Esophagus squamous epithelium (tissue), 5 donors: ENCODE measurements at regions of chr2 and their contacts with region 1.

Region 1: GRCh38 chr2:36459725-36460137 is 104.2 kb downstream of the CRIM1 start:
- DNase-seq: no peak
- H3K4me3 ChIP-seq: no peak overlapping the region
- H3K27ac ChIP-seq: peak overlapping the region in 3 of 4 donors; percentile 17 to 73 (median 34)
- H3K4me1 ChIP-seq: peaks cover 10 to 83% (median 41%) of the 10 kb centered on the region in 3 donors
- H3K27me3 ChIP-seq: no peaks in the 10 kb centered on the region
- CTCF ChIP-seq: peak in 3 of 6 experiments; percentile 12 to 21 (median 21)
- POLR2A ChIP-seq: no peak

Region 2: GRCh38 chr2:36123995-36124394 is 335.7 kb before region 1 on chr2:
- intact Hi-C with region 1: no loop called
- DNase-seq: no peak
- H3K4me3 ChIP-seq: no peak overlapping the region
- H3K27ac ChIP-seq: no peak overlapping the region
- H3K4me1 ChIP-seq: no peaks in the 10 kb centered on the region
- H3K27me3 ChIP-seq: no peaks in the 10 kb centered on the region
- CTCF ChIP-seq: no peak
- POLR2A ChIP-seq: no peak

Region 3: GRCh38 chr2:36367895-36368353 is 91.8 kb before region 1 on chr2:
- intact Hi-C with region 1: loop called (anchors 10 kb)
- DNase-seq: no peak
- H3K4me3 ChIP-seq: peak overlapping the region in 2 of 4 donors; percentile 10 to 21
- H3K27ac ChIP-seq: peak overlapping the region; percentile 69 to 81 (median 70)
- H3K4me1 ChIP-seq: peaks cover 34 to 98% (median 73%) of the 10 kb centered on the region in 3 donors
- H3K27me3 ChIP-seq: no peaks in the 10 kb centered on the region
- CTCF ChIP-seq: peak in 1 of 6 experiments; percentile 4
- POLR2A ChIP-seq: no peak

Region 4: GRCh38 chr2:36597532-36598377 is 138.0 kb after region 1 on chr2 and contains the start of gene FEZ2:
- intact Hi-C with region 1: no loop called
- DNase-seq: no peak
- H3K4me3 ChIP-seq: peak within 1 kb of the TSS; percentile 95 to 100 (median 99)
- H3K27ac ChIP-seq: peak within 1 kb of the TSS; percentile 94 to 98 (median 98)
- H3K4me1 ChIP-seq: peaks cover 8 to 37% (median 16%) of the 10 kb centered on the region in 3 donors
- H3K27me3 ChIP-seq: no peaks in the 10 kb centered on the region
- CTCF ChIP-seq: no peak
- POLR2A ChIP-seq: peak in 2 of 4 donors; percentile 19 to 35
- total RNA-seq, gene FEZ2: 9.2 to 34.9 (median 26.4) TPM